GM12878 (cell line): ENCODE measurements at regions of chr2 and their contacts with region 1.

Region 1: GRCh38 chr2:21025690-21026478 is 18.0 kb downstream of the APOB start:
- DNase-seq: no peak
- ATAC-seq: no peak
- H3K4me3 ChIP-seq: no peak overlapping the region
- H3K27ac ChIP-seq: no peak overlapping the region
- H3K4me1 ChIP-seq: no peaks in the 10 kb centered on the region
- H3K27me3 ChIP-seq: 0 out of 4 replicates have a peak, but pooled peaks cover 0 to 2% of the 10 kb centered on the region in 2 experiments
- CTCF ChIP-seq: no peak
- EP300 ChIP-seq: no peak
- POLR2A ChIP-seq: no peak
- RAD21 ChIP-seq: no peak

Region 2: GRCh38 chr2:20496081-20496876 is 529.6 kb before region 1 on chr2:
- CTCF ChIA-PET with region 1: no interaction called
- POLR2A ChIA-PET with region 1: no interaction called
- RAD21 ChIA-PET with region 1: no interaction called
- SMC1A ChIA-PET with region 1: no interaction called
- in situ Hi-C with region 1: no loop called
- intact Hi-C with region 1: no loop called
- DNase-seq: no peak
- ATAC-seq: no peak
- H3K4me3 ChIP-seq: no peak overlapping the region
- H3K27ac ChIP-seq: no peak overlapping the region
- H3K4me1 ChIP-seq: no peaks in the 10 kb centered on the region
- H3K27me3 ChIP-seq: peaks cover 0 to 2% of the 10 kb centered on the region in 2 experiments; a peak in 3 of 4 replicates
- CTCF ChIP-seq: no peak
- EP300 ChIP-seq: no peak
- POLR2A ChIP-seq: no peak
- RAD21 ChIP-seq: no peak

Region 3: DNA sequence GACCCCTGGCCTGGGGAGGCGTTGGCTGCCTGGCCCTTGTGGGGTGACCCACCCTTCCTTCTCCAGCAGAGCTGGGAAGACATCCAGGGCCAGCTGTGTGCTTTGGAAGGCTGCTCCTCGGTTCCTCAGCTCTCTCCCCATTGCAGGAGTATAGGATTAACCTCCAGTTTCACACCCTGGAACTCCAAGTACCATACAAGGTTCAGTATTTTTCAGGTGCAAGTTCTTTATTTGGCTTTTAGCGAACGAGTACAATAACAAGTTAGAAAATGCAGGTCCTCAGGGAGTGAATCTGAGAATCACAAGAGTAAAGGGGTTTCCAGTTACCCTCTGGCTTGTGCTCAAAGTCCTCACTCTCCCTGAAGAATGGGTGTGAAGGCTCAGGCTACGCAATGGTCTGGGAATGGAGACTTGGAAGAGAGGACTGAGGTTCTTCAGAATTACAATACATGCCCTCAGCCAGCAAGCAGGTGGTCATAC is 83.2 kb before region 1 on chr2:
- CTCF ChIA-PET with region 1: no interaction called
- POLR2A ChIA-PET with region 1: no interaction called
- RAD21 ChIA-PET with region 1: no interaction called
- SMC1A ChIA-PET with region 1: no interaction called
- in situ Hi-C with region 1: no loop called
- intact Hi-C with region 1: no loop called
- DNase-seq: no peak
- ATAC-seq: no peak
- H3K4me3 ChIP-seq: no peak overlapping the region
- H3K27ac ChIP-seq: no peak overlapping the region
- H3K4me1 ChIP-seq: no peaks in the 10 kb centered on the region
- H3K27me3 ChIP-seq: peaks cover 0 to 5% of the 10 kb centered on the region in 2 experiments; a peak in 1 of 4 replicates
- CTCF ChIP-seq: no peak
- EP300 ChIP-seq: no peak
- POLR2A ChIP-seq: no peak
- RAD21 ChIP-seq: no peak

Region 4: GRCh38 chr2:21015281-21015645 is 10.6 kb before region 1 on chr2:
- CTCF ChIA-PET with region 1: no interaction called
- POLR2A ChIA-PET with region 1: no interaction called
- RAD21 ChIA-PET with region 1: no interaction called
- SMC1A ChIA-PET with region 1: interaction called, 10 read pairs
- in situ Hi-C with region 1: no loop called
- intact Hi-C with region 1: no loop called
- DNase-seq: no peak
- ATAC-seq: no peak
- H3K4me3 ChIP-seq: no peak overlapping the region
- H3K27ac ChIP-seq: no peak overlapping the region
- H3K4me1 ChIP-seq: no peaks in the 10 kb centered on the region
- H3K27me3 ChIP-seq: no peaks in the 10 kb centered on the region; a peak in 1 of 4 replicates
- CTCF ChIP-seq: no peak
- EP300 ChIP-seq: no peak
- POLR2A ChIP-seq: no peak
- RAD21 ChIP-seq: no peak